OCI-LY7 (cell line): ENCODE measurements at regions of chr11 and their contacts with region 1.

Region 1: DNA sequence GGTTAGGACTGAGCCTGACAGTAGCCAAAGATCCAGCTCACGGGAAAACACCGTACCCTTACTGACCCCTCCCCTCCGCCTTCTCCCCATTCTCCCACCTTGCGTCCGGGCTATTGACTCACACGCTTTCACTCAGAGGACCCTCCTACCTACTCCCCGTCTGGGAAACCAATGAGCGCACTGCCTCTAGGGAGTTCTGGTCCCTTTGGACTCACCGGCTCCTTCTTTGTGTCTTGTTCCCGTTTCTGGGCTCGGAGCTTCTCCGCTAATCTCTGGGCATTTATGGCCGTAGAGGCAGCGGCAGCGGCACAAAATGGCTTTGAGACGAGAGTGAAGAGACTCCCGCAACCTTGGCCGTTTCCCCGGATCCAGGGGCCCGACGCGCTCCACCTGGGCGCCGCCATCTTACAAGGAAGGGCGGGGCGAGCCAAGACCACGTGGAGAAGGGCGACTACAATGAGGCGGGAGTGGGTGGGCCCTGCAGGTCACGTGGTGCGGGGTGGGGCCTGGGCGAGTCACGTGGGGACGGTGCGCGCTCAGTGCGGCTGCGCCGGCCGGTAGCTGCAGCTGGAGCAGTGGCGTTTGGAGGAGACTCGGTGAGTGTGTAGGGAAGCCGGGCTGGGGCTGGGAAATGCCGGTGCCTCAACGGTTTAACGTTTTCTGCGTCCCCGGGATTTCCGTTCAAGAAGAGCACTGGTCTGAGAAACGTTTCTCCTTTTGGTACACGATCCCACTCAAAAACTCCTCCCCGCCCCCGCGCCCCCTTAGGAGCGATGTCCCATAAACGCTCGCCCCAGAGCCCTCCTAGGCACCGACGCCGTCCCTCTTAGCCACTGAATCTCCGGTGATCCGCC is at the starts of genes FAM118B and RPUSD4:
- DNase-seq: peak; percentile 97
- H3K4me3 ChIP-seq: peak within 1 kb of the TSS; percentile 81
- H3K27ac ChIP-seq: peak within 1 kb of the TSS; percentile 17
- H3K4me1 ChIP-seq: peaks cover 22% of the 10 kb centered on the region
- CTCF ChIP-seq: no peak
- total RNA-seq, gene FAM118B: 9.9 and 11.5 TPM in 2 replicates
- total RNA-seq, gene RPUSD4: 29.1 and 39.2 TPM in 2 replicates

Region 2: GRCh38 chr11:125728969-125729368 is 482.5 kb before region 1 on chr11:
- CTCF ChIA-PET with region 1: no interaction called
- POLR2A ChIA-PET with region 1: no interaction called
- intact Hi-C with region 1: no loop called
- DNase-seq: no peak
- H3K4me3 ChIP-seq: no peak overlapping the region
- H3K27ac ChIP-seq: no peak overlapping the region
- H3K4me1 ChIP-seq: no peaks in the 10 kb centered on the region
- CTCF ChIP-seq: no peak

Region 3: DNA sequence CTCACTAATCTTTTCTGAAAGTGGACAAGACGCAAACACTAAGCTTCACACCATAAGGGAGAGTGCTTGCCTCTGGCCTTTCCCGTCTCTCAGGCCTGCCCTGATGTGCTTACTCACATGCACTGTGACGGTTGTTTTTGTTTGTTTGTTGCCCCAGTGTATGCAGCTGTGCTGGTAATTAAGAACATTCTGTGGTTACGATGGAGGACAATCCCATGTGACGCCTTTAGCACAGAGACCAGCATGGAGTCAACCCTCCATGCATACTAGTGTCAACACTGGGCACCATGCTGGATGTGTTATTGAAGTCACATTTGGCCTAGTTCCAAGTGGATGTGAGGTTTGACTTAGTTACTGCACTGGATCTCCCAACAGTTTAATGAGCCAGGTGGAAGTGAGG is 121.0 kb before region 1 on chr11:
- CTCF ChIA-PET with region 1: no interaction called
- POLR2A ChIA-PET with region 1: interaction called, 11 read pairs
- intact Hi-C with region 1: no loop called
- DNase-seq: no peak
- H3K4me3 ChIP-seq: no peak overlapping the region
- H3K27ac ChIP-seq: no peak overlapping the region
- H3K4me1 ChIP-seq: no peaks in the 10 kb centered on the region
- CTCF ChIP-seq: no peak

Region 4: GRCh38 chr11:126172596-126173038 is 38.8 kb before region 1 on chr11:
- CTCF ChIA-PET with region 1: no interaction called
- POLR2A ChIA-PET with region 1: no interaction called
- intact Hi-C with region 1: no loop called
- DNase-seq: no peak
- H3K4me3 ChIP-seq: no peak overlapping the region
- H3K27ac ChIP-seq: no peak overlapping the region
- H3K4me1 ChIP-seq: no peaks in the 10 kb centered on the region
- CTCF ChIP-seq: no peak